ENCODE measurements at regions of chr9 and their contacts with region 1.

Region 1: GRCh38 chr9:124708633-124709291 is 62.3 kb downstream of the NR6A1 start:
- DNase-seq: no peak
- ATAC-seq: no peak
- H3K4me3 ChIP-seq: no peak overlapping the region
- H3K4me3 Mint-ChIP-seq: no peak overlapping the region
- H3K27ac ChIP-seq: no peak overlapping the region
- H3K27ac Mint-ChIP-seq: no peak overlapping the region
- H3K4me1 ChIP-seq: no peaks in the 10 kb centered on the region
- H3K4me1 Mint-ChIP-seq: no peaks in the 10 kb centered on the region
- H3K27me3 ChIP-seq: peaks cover 0 to 9% of the 10 kb centered on the region in 2 experiments
- H3K27me3 Mint-ChIP-seq: peaks cover 27% of the 10 kb centered on the region
- CTCF ChIP-seq: no peak

Region 2: GRCh38 chr9:124551472-124552272 is 157.1 kb before region 1 on chr9:
- CTCF ChIA-PET with region 1: interaction called, 4 read pairs
- POLR2A ChIA-PET with region 1: no interaction called
- intact Hi-C with region 1: loop called (anchors 1 to 5 kb)
- DNase-seq: peak in 6 of 14 experiments; percentile 1 to 40 (median 26)
- ATAC-seq: peak; percentile 39
- H3K4me3 ChIP-seq: no peak overlapping the region
- H3K4me3 Mint-ChIP-seq: no peak overlapping the region
- H3K27ac ChIP-seq: no peak overlapping the region
- H3K27ac Mint-ChIP-seq: no peak overlapping the region
- H3K4me1 ChIP-seq: no peaks in the 10 kb centered on the region
- H3K4me1 Mint-ChIP-seq: peaks cover 7% of the 10 kb centered on the region
- H3K27me3 ChIP-seq: peaks cover 0 to 2% of the 10 kb centered on the region in 2 experiments
- H3K27me3 Mint-ChIP-seq: no peaks in the 10 kb centered on the region
- CTCF ChIP-seq: peak; percentile 41

Region 3: DNA sequence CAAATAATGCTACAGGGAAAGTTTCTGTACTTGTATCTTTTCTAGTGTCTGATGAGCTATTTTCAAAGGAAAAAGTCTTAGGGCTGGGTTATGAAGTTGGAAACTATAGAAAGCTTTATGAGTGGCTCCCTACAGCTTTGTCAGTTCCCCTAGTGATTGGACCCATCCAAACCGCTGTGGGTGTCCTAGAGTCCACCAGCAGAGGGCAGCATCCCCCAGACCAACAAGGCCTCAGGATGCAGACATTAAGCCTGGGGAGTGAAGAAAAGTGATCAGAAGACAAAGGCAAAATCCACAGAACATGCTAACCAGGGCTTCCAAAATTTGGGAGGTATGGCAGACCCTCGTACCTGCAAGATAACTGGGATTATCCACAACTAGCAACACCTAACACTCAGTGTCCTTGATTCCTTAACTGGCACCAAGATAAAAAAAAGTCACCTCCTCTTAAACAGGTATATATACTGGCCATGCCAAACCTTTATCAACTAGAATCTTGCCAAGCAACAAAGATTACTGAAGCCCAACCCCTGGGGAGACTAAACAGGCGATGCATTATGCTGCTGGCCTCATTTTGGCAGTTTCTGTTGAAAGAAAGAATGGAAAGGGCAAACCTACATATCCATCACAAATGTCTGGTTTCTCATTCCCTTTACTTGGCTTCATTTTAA is 91.2 kb before region 1 on chr9:
- CTCF ChIA-PET with region 1: interaction called, 6 read pairs
- POLR2A ChIA-PET with region 1: interaction called, 4 read pairs
- intact Hi-C with region 1: loop called (anchors 1 kb)
- DNase-seq: peak; percentile 56 to 82 (median 63)
- ATAC-seq: peak; percentile 71
- H3K4me3 ChIP-seq: no peak overlapping the region
- H3K4me3 Mint-ChIP-seq: no peak overlapping the region
- H3K27ac ChIP-seq: no peak overlapping the region
- H3K27ac Mint-ChIP-seq: no peak overlapping the region
- H3K4me1 ChIP-seq: no peaks in the 10 kb centered on the region
- H3K4me1 Mint-ChIP-seq: no peaks in the 10 kb centered on the region
- H3K27me3 ChIP-seq: peaks cover 0 to 6% of the 10 kb centered on the region in 2 experiments
- H3K27me3 Mint-ChIP-seq: peaks cover 12% of the 10 kb centered on the region
- CTCF ChIP-seq: peak; percentile 74

Region 4: GRCh38 chr9:124652203-124652992 is 56.4 kb before region 1 on chr9:
- CTCF ChIA-PET with region 1: no interaction called
- POLR2A ChIA-PET with region 1: no interaction called
- intact Hi-C with region 1: no loop called
- DNase-seq: no peak
- ATAC-seq: no peak
- H3K4me3 ChIP-seq: no peak overlapping the region
- H3K4me3 Mint-ChIP-seq: no peak overlapping the region
- H3K27ac ChIP-seq: no peak overlapping the region
- H3K27ac Mint-ChIP-seq: no peak overlapping the region
- H3K4me1 ChIP-seq: no peaks in the 10 kb centered on the region
- H3K4me1 Mint-ChIP-seq: no peaks in the 10 kb centered on the region
- H3K27me3 ChIP-seq: no peaks in the 10 kb centered on the region
- H3K27me3 Mint-ChIP-seq: no peaks in the 10 kb centered on the region
- CTCF ChIP-seq: no peak

Region 5: GRCh38 chr9:124894741-124895170 is 186.0 kb after region 1 on chr9:
- CTCF ChIA-PET with region 1: no interaction called
- POLR2A ChIA-PET with region 1: no interaction called
- intact Hi-C with region 1: loop called in 1 of 2 experiments (anchors 5 kb)
- DNase-seq: peak in 11 of 14 experiments; percentile 10 to 77 (median 37)
- ATAC-seq: peak; percentile 96
- H3K4me3 ChIP-seq: no peak overlapping the region
- H3K4me3 Mint-ChIP-seq: no peak overlapping the region
- H3K27ac ChIP-seq: no peak overlapping the region
- H3K27ac Mint-ChIP-seq: no peak overlapping the region
- H3K4me1 ChIP-seq: peaks cover 8% of the 10 kb centered on the region
- H3K4me1 Mint-ChIP-seq: peaks cover 14% of the 10 kb centered on the region
- H3K27me3 ChIP-seq: no peaks in the 10 kb centered on the region
- H3K27me3 Mint-ChIP-seq: peaks cover 7% of the 10 kb centered on the region
- CTCF ChIP-seq: peak; percentile 31

Region 6: GRCh38 chr9:125374443-125375309 is 665.9 kb after region 1 on chr9:
- CTCF ChIA-PET with region 1: no interaction called
- POLR2A ChIA-PET with region 1: no interaction called
- intact Hi-C with region 1: loop called (anchors 1 to 2 kb)
- DNase-seq: peak; percentile 38 to 82 (median 56)
- ATAC-seq: peak; percentile 98
- H3K4me3 ChIP-seq: no peak overlapping the region
- H3K4me3 Mint-ChIP-seq: peak overlapping the region; percentile 40
- H3K27ac ChIP-seq: no peak overlapping the region
- H3K27ac Mint-ChIP-seq: no peak overlapping the region
- H3K4me1 ChIP-seq: peaks cover 10% of the 10 kb centered on the region
- H3K4me1 Mint-ChIP-seq: peaks cover 6% of the 10 kb centered on the region
- H3K27me3 ChIP-seq: peaks cover 0 to 5% of the 10 kb centered on the region in 2 experiments
- H3K27me3 Mint-ChIP-seq: peaks cover 21% of the 10 kb centered on the region
- CTCF ChIP-seq: peak; percentile 74